ENCODE measurements at regions of chr13 and their contacts with region 1.

Region 1: DNA sequence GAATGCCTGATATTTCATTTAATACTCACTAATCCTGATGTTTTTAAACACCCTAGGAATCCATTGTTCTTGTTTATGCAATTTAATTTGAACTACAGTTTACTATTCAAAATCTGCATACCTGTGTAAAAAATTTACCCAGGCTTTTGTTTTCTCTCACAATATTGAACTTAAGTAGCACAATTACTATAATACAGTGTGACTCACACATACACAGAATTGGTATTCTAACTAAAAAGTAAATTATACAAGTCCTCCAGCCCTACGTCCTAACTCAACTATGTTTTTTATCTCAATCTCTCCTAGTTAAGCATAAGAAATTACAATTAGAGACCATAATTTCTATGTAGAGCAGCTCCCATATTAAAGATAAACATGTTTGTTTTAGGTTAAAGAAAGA is 41.8 kb downstream of the MYCBP2 start:
- DNase-seq: no peak
- ATAC-seq: no peak
- H3K4me3 ChIP-seq: no peak overlapping the region
- H3K27ac ChIP-seq: no peak overlapping the region
- H3K4me1 ChIP-seq: no peaks in the 10 kb centered on the region
- H3K27me3 ChIP-seq: no peaks in the 10 kb centered on the region
- CTCF ChIP-seq: no peak
- EP300 ChIP-seq: no peak
- POLR2A ChIP-seq: no peak
- RAD21 ChIP-seq: no peak

Region 2: GRCh38 chr13:77207943-77208342 is 77.2 kb before region 1 on chr13:
- CTCF ChIA-PET with region 1: no interaction called
- POLR2A ChIA-PET with region 1: no interaction called
- RAD21 ChIA-PET with region 1: no interaction called
- SMC1A ChIA-PET with region 1: no interaction called
- in situ Hi-C with region 1: no loop called
- intact Hi-C with region 1: no loop called
- DNase-seq: no peak
- ATAC-seq: no peak
- H3K4me3 ChIP-seq: no peak overlapping the region
- H3K27ac ChIP-seq: no peak overlapping the region
- H3K4me1 ChIP-seq: no peaks in the 10 kb centered on the region
- H3K27me3 ChIP-seq: no peaks in the 10 kb centered on the region
- CTCF ChIP-seq: no peak
- EP300 ChIP-seq: no peak
- POLR2A ChIP-seq: no peak
- RAD21 ChIP-seq: no peak

Region 3: GRCh38 chr13:77274126-77274525 is 11.0 kb before region 1 on chr13:
- CTCF ChIA-PET with region 1: interaction called, 3 read pairs
- POLR2A ChIA-PET with region 1: interaction called, 3 read pairs
- RAD21 ChIA-PET with region 1: no interaction called
- SMC1A ChIA-PET with region 1: interaction called, 18 read pairs
- in situ Hi-C with region 1: no loop called
- intact Hi-C with region 1: no loop called
- DNase-seq: no peak
- ATAC-seq: no peak
- H3K4me3 ChIP-seq: no peak overlapping the region
- H3K27ac ChIP-seq: no peak overlapping the region
- H3K4me1 ChIP-seq: no peaks in the 10 kb centered on the region
- H3K27me3 ChIP-seq: no peaks in the 10 kb centered on the region
- CTCF ChIP-seq: no peak; a peak in 1 of 6 replicates
- EP300 ChIP-seq: no peak
- POLR2A ChIP-seq: no peak
- RAD21 ChIP-seq: 0 out of 2 replicates have a peak, but pooled peaks have one; percentile 24

Measured in GM12878 (cell line).